CD8-positive, alpha-beta T cell (primary cell): ENCODE measurements at regions of chr18 and their contacts with region 1.

Region 1: DNA sequence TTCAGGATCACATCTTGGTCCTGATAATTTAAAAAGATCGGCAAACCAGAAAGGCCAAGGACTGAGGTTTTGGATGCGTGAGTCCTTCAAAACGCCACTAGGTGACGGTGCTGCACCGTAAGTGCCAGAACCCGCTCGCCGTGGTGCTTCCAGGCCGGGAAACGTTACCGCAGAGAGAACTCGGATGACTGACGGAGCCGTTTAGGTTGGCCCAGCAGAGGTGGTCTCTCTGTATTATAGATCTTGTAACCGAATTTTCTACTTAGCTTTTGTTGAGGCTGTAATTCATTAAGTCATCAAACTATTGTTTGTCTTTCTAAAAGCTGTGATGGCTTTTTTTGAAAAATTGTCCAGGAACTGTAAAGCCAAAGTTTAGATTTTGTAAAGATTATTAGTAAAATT is 39.8 kb upstream of the ADCYAP1 start:
- DNase-seq: peak; percentile 9 to 77 (median 59)
- ATAC-seq: peak; percentile 81
- H3K4me3 ChIP-seq: no peak overlapping the region
- H3K4me3 Mint-ChIP-seq: no peak overlapping the region
- H3K27ac ChIP-seq: no peak overlapping the region
- H3K27ac Mint-ChIP-seq: no peak overlapping the region
- H3K4me1 ChIP-seq: no peaks in the 10 kb centered on the region
- H3K4me1 Mint-ChIP-seq: peaks cover 6% of the 10 kb centered on the region
- H3K27me3 ChIP-seq: no peaks in the 10 kb centered on the region
- H3K27me3 Mint-ChIP-seq: peaks cover 39% of the 10 kb centered on the region
- CTCF ChIP-seq: peak; percentile 92

Region 2: DNA sequence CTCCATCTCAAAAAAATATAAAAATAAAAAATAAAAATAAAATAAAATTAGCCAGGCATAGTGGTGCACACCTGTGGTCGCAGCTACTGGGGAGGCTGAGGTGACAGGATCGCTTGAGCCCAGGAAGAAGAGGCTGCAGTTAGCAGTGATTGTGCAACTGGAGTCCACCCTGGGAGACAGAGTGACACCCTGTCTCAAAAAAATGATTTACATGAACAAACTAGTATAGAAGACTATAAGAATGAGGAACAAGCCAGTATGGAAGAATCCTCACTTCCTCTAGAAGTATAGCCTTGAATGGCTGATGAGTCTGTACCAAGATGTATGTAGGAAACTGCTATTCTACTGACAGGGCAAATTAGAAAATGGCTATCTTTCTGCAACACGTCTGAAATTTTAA is 63.7 kb before region 1 on chr18:
- CTCF ChIA-PET with region 1: no interaction called
- POLR2A ChIA-PET with region 1: no interaction called
- intact Hi-C with region 1: no loop called
- DNase-seq: no peak
- ATAC-seq: no peak
- H3K4me3 ChIP-seq: no peak overlapping the region
- H3K4me3 Mint-ChIP-seq: no peak overlapping the region
- H3K27ac ChIP-seq: no peak overlapping the region
- H3K27ac Mint-ChIP-seq: no peak overlapping the region
- H3K4me1 ChIP-seq: peaks cover 36% of the 10 kb centered on the region
- H3K4me1 Mint-ChIP-seq: peaks cover 68% of the 10 kb centered on the region
- H3K27me3 ChIP-seq: no peaks in the 10 kb centered on the region
- H3K27me3 Mint-ChIP-seq: no peaks in the 10 kb centered on the region
- CTCF ChIP-seq: no peak

Region 3: GRCh38 chr18:830315-830901 is 34.5 kb before region 1 on chr18:
- CTCF ChIA-PET with region 1: no interaction called
- POLR2A ChIA-PET with region 1: no interaction called
- intact Hi-C with region 1: no loop called
- DNase-seq: peak in 6 of 9 experiments; percentile 19 to 85 (median 56)
- ATAC-seq: peak; percentile 81
- H3K4me3 ChIP-seq: peak overlapping the region in 1 of 2 experiments; percentile 22
- H3K4me3 Mint-ChIP-seq: peak overlapping the region; percentile 59
- H3K27ac ChIP-seq: peak overlapping the region; percentile 26 to 83
- H3K27ac Mint-ChIP-seq: peak overlapping the region; percentile 68
- H3K4me1 ChIP-seq: peaks cover 23% of the 10 kb centered on the region
- H3K4me1 Mint-ChIP-seq: peaks cover 26% of the 10 kb centered on the region
- H3K27me3 ChIP-seq: no peaks in the 10 kb centered on the region
- H3K27me3 Mint-ChIP-seq: no peaks in the 10 kb centered on the region
- CTCF ChIP-seq: no peak

Region 4: GRCh38 chr18:961644-962355 is 96.9 kb after region 1 on chr18:
- CTCF ChIA-PET with region 1: interaction called, 18 read pairs
- POLR2A ChIA-PET with region 1: no interaction called
- intact Hi-C with region 1: loop called in 1 of 2 experiments (anchors 1 kb)
- DNase-seq: peak in 8 of 9 experiments; percentile 9 to 58 (median 46)
- ATAC-seq: no peak
- H3K4me3 ChIP-seq: no peak overlapping the region
- H3K4me3 Mint-ChIP-seq: peak overlapping the region; percentile 58
- H3K27ac ChIP-seq: no peak overlapping the region
- H3K27ac Mint-ChIP-seq: no peak overlapping the region
- H3K4me1 ChIP-seq: no peaks in the 10 kb centered on the region
- H3K4me1 Mint-ChIP-seq: peaks cover 4% of the 10 kb centered on the region
- H3K27me3 ChIP-seq: peaks cover 0 to 4% of the 10 kb centered on the region in 2 experiments
- H3K27me3 Mint-ChIP-seq: peaks cover 9% of the 10 kb centered on the region
- CTCF ChIP-seq: peak; percentile 94

Region 5: GRCh38 chr18:1585879-1586488 is 721.1 kb after region 1 on chr18:
- CTCF ChIA-PET with region 1: no interaction called
- POLR2A ChIA-PET with region 1: no interaction called
- intact Hi-C with region 1: no loop called
- DNase-seq: peak in 2 of 9 experiments; percentile 5 to 12
- ATAC-seq: no peak
- H3K4me3 ChIP-seq: no peak overlapping the region
- H3K4me3 Mint-ChIP-seq: no peak overlapping the region
- H3K27ac ChIP-seq: no peak overlapping the region
- H3K27ac Mint-ChIP-seq: no peak overlapping the region
- H3K4me1 ChIP-seq: no peaks in the 10 kb centered on the region
- H3K4me1 Mint-ChIP-seq: peaks cover 4% of the 10 kb centered on the region
- H3K27me3 ChIP-seq: no peaks in the 10 kb centered on the region
- H3K27me3 Mint-ChIP-seq: peaks cover 2% of the 10 kb centered on the region
- CTCF ChIP-seq: peak; percentile 45

Region 6: DNA sequence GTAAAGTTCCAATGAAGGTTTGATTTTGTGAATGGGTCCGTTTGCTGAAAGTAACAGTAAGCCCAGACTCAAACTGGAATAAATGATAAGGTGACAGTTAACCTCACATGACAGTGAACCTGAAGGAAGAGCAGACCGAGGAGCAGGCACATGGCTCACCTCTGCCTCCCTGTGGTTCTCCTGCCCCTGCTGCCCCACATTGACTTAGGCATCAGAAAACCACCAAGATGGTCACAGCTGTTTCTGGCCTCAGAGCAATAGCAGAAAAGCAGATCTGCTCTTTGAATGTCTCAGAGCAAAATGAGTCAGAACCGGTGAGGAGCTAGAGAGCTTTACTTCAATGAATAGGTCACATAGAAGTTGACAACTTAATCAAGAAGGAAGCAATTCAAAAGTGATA is 1218.8 kb after region 1 on chr18:
- CTCF ChIA-PET with region 1: no interaction called
- POLR2A ChIA-PET with region 1: no interaction called
- intact Hi-C with region 1: loop called in 1 of 2 experiments (anchors 5 kb)
- DNase-seq: no peak
- ATAC-seq: no peak
- H3K4me3 ChIP-seq: no peak overlapping the region
- H3K4me3 Mint-ChIP-seq: no peak overlapping the region
- H3K27ac ChIP-seq: no peak overlapping the region
- H3K27ac Mint-ChIP-seq: no peak overlapping the region
- H3K4me1 ChIP-seq: no peaks in the 10 kb centered on the region
- H3K4me1 Mint-ChIP-seq: no peaks in the 10 kb centered on the region
- H3K27me3 ChIP-seq: no peaks in the 10 kb centered on the region
- H3K27me3 Mint-ChIP-seq: no peaks in the 10 kb centered on the region
- CTCF ChIP-seq: no peak

Region 7: GRCh38 chr18:2104620-2105462 is 1240.0 kb after region 1 on chr18:
- CTCF ChIA-PET with region 1: no interaction called
- POLR2A ChIA-PET with region 1: no interaction called
- intact Hi-C with region 1: loop called in 1 of 2 experiments (anchors 10 kb)
- DNase-seq: peak in 8 of 9 experiments; percentile 6 to 55 (median 32)
- ATAC-seq: no peak
- H3K4me3 ChIP-seq: no peak overlapping the region
- H3K4me3 Mint-ChIP-seq: no peak overlapping the region
- H3K27ac ChIP-seq: no peak overlapping the region
- H3K27ac Mint-ChIP-seq: no peak overlapping the region
- H3K4me1 ChIP-seq: no peaks in the 10 kb centered on the region
- H3K4me1 Mint-ChIP-seq: no peaks in the 10 kb centered on the region
- H3K27me3 ChIP-seq: no peaks in the 10 kb centered on the region
- H3K27me3 Mint-ChIP-seq: peaks cover 6% of the 10 kb centered on the region
- CTCF ChIP-seq: peak; percentile 40

Region 8: DNA sequence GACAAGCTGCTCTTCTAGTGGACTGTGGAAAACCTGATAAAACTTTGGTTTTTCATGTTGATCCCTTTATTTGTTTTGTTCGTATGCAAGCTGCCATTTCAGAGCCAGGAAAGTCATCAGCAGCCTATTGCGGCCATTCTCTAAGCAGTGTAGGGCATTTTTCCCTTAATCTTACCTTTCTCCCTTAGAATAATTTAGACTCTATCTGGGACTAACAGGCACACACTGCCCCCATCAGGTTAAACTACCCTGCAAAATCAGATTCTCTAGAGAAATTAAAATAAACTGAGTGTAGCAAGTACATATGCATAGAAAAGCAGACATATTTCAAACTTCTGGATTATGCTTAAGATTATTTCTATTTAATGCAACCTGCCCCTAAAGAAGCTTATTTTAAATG is 1359.0 kb after region 1 on chr18:
- CTCF ChIA-PET with region 1: no interaction called
- POLR2A ChIA-PET with region 1: no interaction called
- intact Hi-C with region 1: loop called (anchors 5 to 10 kb)
- DNase-seq: no peak
- ATAC-seq: no peak
- H3K4me3 ChIP-seq: no peak overlapping the region
- H3K4me3 Mint-ChIP-seq: no peak overlapping the region
- H3K27ac ChIP-seq: no peak overlapping the region
- H3K27ac Mint-ChIP-seq: no peak overlapping the region
- H3K4me1 ChIP-seq: no peaks in the 10 kb centered on the region
- H3K4me1 Mint-ChIP-seq: no peaks in the 10 kb centered on the region
- H3K27me3 ChIP-seq: no peaks in the 10 kb centered on the region
- H3K27me3 Mint-ChIP-seq: peaks cover 2% of the 10 kb centered on the region
- CTCF ChIP-seq: no peak

Region 9: GRCh38 chr18:2337552-2338141 is 1472.8 kb after region 1 on chr18:
- CTCF ChIA-PET with region 1: no interaction called
- POLR2A ChIA-PET with region 1: no interaction called
- intact Hi-C with region 1: loop called in 1 of 2 experiments (anchors 10 kb)
- DNase-seq: peak in 8 of 9 experiments; percentile 5 to 61 (median 22)
- ATAC-seq: no peak
- H3K4me3 ChIP-seq: no peak overlapping the region
- H3K4me3 Mint-ChIP-seq: no peak overlapping the region
- H3K27ac ChIP-seq: no peak overlapping the region
- H3K27ac Mint-ChIP-seq: no peak overlapping the region
- H3K4me1 ChIP-seq: no peaks in the 10 kb centered on the region
- H3K4me1 Mint-ChIP-seq: no peaks in the 10 kb centered on the region
- H3K27me3 ChIP-seq: no peaks in the 10 kb centered on the region
- H3K27me3 Mint-ChIP-seq: peaks cover 13% of the 10 kb centered on the region
- CTCF ChIP-seq: peak; percentile 55

Region 10: GRCh38 chr18:2547477-2548087 is 1682.7 kb after region 1 on chr18:
- CTCF ChIA-PET with region 1: no interaction called
- POLR2A ChIA-PET with region 1: no interaction called
- intact Hi-C with region 1: loop called in 1 of 2 experiments (anchors 2 kb)
- DNase-seq: peak in 2 of 9 experiments; percentile 54 to 66
- ATAC-seq: peak; percentile 52
- H3K4me3 ChIP-seq: no peak overlapping the region
- H3K4me3 Mint-ChIP-seq: no peak overlapping the region
- H3K27ac ChIP-seq: no peak overlapping the region
- H3K27ac Mint-ChIP-seq: no peak overlapping the region
- H3K4me1 ChIP-seq: no peaks in the 10 kb centered on the region
- H3K4me1 Mint-ChIP-seq: peaks cover 11% of the 10 kb centered on the region
- H3K27me3 ChIP-seq: no peaks in the 10 kb centered on the region
- H3K27me3 Mint-ChIP-seq: no peaks in the 10 kb centered on the region
- CTCF ChIP-seq: peak; percentile 79